AG04449 (cell line): ENCODE measurements at regions of chr10 and their contacts with region 1.

Region 1: DNA sequence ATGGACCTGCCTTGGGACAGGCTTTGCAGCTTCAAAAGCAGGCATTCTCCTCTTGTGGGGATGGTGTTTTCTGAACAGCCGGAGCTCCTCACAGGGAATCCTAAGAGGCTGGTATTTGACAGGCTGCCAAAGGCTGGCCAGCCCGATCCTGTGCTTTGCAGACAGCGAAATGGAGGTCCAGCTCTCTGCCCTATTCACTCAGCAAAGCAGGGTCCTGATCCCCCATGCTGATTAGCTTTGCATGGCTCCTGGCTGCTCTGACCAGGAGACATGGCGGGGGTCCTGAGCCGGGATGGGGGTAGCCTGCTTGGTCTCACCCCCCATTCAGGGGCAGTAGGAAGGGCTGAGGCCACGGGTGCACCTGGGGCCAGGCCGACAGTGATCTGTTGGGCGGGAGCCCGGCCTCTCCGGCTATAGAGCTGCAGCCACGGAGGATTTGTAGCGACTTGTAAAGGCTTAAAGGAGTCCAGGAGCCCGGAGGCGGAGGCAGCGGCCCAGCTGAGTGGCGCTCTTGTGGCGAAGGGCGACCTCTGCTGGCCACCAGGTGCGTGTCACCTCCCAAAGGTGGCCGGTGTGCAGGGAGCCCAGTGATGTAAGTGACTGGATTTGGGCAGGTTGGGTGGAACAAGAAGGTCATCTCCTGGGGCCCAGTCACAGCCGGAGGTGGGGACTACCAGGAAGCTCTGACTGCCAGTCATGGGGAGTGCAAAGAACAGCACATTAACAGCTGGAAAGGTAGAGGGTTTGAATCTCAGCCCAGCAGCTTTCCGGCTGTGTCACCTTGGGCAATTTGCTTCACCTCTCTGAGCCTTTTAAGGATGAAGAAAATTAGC is 126.5 kb downstream of the ZMIZ1 start:
- DNase-seq: no peak
- H3K4me3 ChIP-seq: no peak overlapping the region
- CTCF ChIP-seq: peak; percentile 96

Region 2: GRCh38 chr10:78944723-78945312 is 250.5 kb before region 1 on chr10:
- CTCF ChIA-PET with region 1: interaction called, 25 read pairs
- POLR2A ChIA-PET with region 1: no interaction called
- DNase-seq: peak; percentile 88
- H3K4me3 ChIP-seq: no peak overlapping the region
- CTCF ChIP-seq: peak; percentile 39

Region 3: GRCh38 chr10:79014796-79015195 is 180.5 kb before region 1 on chr10:
- CTCF ChIA-PET with region 1: no interaction called
- POLR2A ChIA-PET with region 1: no interaction called
- DNase-seq: no peak
- H3K4me3 ChIP-seq: no peak overlapping the region
- CTCF ChIP-seq: no peak

Region 4: DNA sequence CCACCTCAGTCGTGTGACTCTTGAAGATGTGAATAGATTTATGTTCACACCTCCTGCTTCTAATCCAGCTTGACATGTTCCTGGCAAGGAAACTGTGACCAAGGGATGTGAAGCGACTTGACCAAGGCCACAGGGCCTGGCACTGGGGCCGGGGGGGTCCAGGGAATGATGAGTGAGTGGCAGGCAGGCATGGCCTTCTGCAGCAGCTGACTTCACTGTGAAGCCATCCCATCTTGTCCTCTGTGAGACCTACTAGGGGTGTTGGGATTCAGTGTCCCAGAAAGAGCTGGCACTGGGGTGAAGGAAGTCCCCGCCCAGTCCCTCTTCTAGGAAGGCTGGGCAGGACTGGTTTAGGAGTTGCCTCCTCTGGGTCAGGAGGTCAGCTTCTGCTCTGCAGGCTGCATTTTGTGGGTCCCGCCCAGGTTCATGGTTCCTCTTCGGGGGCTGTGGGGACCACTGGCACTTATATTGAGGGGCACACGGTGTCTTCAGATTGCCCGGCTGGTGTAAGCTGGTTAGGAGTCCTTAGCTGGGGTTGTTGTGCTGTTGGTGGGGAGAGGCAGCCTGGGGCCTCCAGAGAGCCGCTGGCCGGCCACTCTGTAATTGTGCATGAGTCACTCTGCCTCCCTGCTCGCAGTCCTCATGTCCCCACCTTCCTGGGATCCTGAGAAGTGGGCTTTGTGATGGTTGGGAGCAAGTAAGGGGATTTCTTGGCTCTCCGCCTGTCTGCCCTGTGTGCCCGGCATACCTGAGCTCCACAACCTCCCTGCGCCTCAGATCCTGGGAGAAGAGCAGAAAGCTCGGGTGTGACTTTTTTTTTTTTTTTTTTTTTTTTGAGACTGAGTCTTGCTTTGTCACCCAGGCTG is 115.6 kb before region 1 on chr10:
- CTCF ChIA-PET with region 1: interaction called, 180 read pairs
- POLR2A ChIA-PET with region 1: interaction called, 4 read pairs
- DNase-seq: no peak
- H3K4me3 ChIP-seq: no peak overlapping the region
- CTCF ChIP-seq: no peak

Region 5: DNA sequence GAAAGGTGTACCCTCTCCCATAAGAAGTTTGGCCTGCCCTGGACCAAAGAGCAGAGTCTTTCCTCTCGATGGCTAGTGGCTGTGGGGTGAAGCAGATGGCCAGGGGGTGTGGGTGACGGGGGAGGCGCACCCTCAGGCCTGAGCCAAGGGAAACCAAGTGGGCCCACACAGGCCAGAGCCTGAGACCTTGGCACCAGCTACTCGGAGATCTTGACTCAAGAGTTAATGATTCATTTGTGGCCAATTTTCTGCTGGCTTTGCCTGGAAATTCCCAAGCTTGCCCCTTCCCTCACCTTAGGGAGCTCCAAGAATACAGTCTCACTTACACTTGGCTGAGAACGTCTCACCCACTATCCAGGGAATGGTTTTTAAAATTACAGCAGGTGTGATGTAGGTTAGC is 83.9 kb before region 1 on chr10:
- CTCF ChIA-PET with region 1: interaction called, 34 read pairs
- POLR2A ChIA-PET with region 1: interaction called, 3 read pairs
- DNase-seq: peak; percentile 16
- H3K4me3 ChIP-seq: no peak overlapping the region
- CTCF ChIP-seq: no peak

Region 6: DNA sequence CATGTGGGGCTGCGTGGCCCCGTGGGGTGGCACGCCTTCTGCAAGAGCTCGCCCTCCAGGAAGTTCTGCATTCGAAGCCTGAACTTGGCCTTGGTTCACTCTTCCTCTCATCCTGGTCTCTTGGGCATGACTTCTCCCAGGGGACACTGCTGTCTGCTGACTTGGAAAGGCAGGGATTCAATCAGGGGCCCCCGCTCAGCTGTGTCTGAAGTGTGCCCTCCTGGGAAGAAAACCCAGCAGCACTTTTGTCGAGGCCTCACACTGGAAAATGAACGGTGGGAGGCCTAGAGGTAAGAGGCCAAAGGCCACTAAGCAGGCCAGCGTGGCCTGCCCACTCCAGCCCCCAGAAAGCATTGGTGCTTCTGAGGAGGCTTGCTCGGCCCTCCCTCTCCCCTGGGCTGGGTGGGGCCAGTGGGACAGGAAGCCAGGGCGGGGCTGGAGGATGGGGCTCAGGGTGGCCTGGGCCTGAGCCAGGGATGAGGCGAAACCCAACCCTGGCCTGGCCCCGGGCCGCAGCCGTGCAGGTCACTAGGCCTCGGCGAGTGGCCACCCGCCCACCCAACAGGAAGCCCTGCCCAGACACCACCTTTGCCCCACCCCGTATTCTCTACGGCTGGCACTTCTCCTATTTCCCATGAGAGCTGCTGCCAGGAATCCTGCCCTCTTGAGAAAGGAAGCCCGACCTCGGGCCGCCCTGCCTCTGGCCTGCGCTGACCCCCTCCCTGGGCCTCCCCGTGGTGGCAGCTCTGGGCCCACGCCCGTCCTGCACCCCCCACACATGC is 45.5 kb before region 1 on chr10:
- CTCF ChIA-PET with region 1: interaction called, 23 read pairs
- POLR2A ChIA-PET with region 1: interaction called, 4 read pairs
- DNase-seq: no peak
- H3K4me3 ChIP-seq: no peak overlapping the region
- CTCF ChIP-seq: no peak

Region 7: DNA sequence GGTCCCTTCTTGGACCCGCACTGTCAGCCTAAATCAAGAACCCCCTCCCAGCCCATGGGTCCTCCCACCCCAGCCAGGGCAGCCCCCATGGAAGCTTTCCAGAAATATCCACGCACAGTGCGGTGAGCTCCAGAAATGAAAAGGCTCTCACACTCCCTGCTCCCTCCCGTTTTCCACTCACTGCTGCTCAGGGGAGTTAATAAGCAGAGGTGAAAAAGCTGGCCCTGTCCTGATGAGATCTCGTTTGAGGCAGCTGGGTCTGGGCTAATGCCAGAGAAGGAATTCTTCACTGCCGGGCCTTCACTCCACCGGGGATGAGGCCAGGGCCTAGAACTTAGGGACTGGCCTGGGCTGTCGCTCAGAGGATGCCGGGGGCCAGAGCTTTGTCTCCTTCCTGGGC is 24.3 kb before region 1 on chr10:
- CTCF ChIA-PET with region 1: interaction called, 31 read pairs
- POLR2A ChIA-PET with region 1: interaction called, 3 read pairs
- DNase-seq: no peak
- H3K4me3 ChIP-seq: no peak overlapping the region
- CTCF ChIP-seq: no peak